HepG2 (cell line): ENCODE measurements at regions of chr11 and their contacts with region 1.

Region 1: GRCh38 chr11:128290106-128290840 is 297.1 kb downstream of the ETS1 start:
- DNase-seq: peak; percentile 21
- ATAC-seq: peak; percentile 94
- H3K4me3 ChIP-seq: no peak overlapping the region
- H3K27ac ChIP-seq: no peak overlapping the region
- H3K4me1 ChIP-seq: peaks cover 12% of the 10 kb centered on the region
- H3K27me3 ChIP-seq: peaks cover 0 to 8% of the 10 kb centered on the region in 2 experiments; a peak in 1 of 5 replicates
- CTCF ChIP-seq: peak; percentile 73
- EP300 ChIP-seq: no peak
- POLR2A ChIP-seq: no peak
- RAD21 ChIP-seq: peak; percentile 58

Region 2: GRCh38 chr11:128172046-128172878 is 118.0 kb before region 1 on chr11:
- CTCF ChIA-PET with region 1: no interaction called
- POLR2A ChIA-PET with region 1: no interaction called
- in situ Hi-C with region 1: no loop called
- intact Hi-C with region 1: loop called (anchors 1 kb)
- DNase-seq: peak; percentile 46
- ATAC-seq: peak; percentile 80
- H3K4me3 ChIP-seq: no peak overlapping the region
- H3K27ac ChIP-seq: no peak overlapping the region
- H3K4me1 ChIP-seq: no peaks in the 10 kb centered on the region
- H3K27me3 ChIP-seq: no peaks in the 10 kb centered on the region
- CTCF ChIP-seq: peak; percentile 79
- EP300 ChIP-seq: no peak
- POLR2A ChIP-seq: no peak
- RAD21 ChIP-seq: peak; percentile 41; the same call in 1 of the 2 replicates

Region 3: GRCh38 chr11:128336203-128336602 is 45.9 kb after region 1 on chr11:
- CTCF ChIA-PET with region 1: no interaction called
- POLR2A ChIA-PET with region 1: no interaction called
- in situ Hi-C with region 1: no loop called
- intact Hi-C with region 1: loop called (anchors 2 kb)
- DNase-seq: peak; percentile 44
- ATAC-seq: peak; percentile 62
- H3K4me3 ChIP-seq: no peak overlapping the region
- H3K27ac ChIP-seq: no peak overlapping the region
- H3K4me1 ChIP-seq: peaks cover 31% of the 10 kb centered on the region
- H3K27me3 ChIP-seq: no peaks in the 10 kb centered on the region
- CTCF ChIP-seq: no peak
- EP300 ChIP-seq: no peak
- POLR2A ChIP-seq: no peak
- RAD21 ChIP-seq: no peak

Region 4: DNA sequence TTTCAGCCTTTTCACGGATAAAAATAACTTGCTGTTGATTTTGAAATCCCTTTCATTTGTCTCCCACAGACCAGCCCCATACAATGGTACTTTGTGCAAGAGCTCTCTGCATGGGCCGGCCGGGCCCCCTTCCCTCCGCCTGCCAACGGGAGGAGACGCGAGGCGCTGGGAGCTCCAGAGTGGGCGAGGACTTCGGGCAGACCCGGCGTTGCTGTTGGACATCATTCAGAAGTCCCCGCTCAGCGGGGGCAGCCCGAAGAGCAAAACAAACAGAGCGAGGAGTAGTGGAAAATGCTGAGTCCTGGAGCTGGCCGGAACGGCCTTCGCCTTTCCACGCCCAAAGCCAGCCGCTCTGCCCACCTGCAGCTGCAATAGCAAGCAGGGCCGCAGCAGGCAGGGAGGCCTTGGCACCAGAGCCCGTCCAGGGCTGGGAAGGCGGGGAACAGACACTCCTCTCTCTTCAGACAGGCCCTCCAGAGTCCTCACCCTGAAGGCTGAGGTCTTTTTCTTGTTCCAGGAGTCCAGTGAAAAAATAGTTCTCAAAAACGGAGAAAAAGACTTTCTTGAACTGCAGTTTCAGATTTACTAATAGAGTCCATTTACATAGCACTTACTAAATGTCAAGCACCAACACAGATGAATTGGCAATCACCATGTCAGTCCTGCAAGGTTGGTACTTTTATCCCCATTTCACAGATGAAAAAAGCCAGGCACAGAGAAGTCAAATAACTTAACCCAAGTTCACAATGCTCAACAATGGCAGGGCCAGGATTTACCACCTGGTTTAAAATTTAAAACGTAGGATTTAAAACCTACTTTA is 161.6 kb after region 1 on chr11:
- CTCF ChIA-PET with region 1: no interaction called
- POLR2A ChIA-PET with region 1: no interaction called
- in situ Hi-C with region 1: no loop called
- intact Hi-C with region 1: loop called (anchors 5 kb)
- DNase-seq: peak; percentile 82
- ATAC-seq: peak; percentile 90
- H3K4me3 ChIP-seq: peak overlapping the region in 2 of 3 experiments; percentile 8 to 44; a peak in 3 of 6 replicates
- H3K27ac ChIP-seq: peak overlapping the region; percentile 31
- H3K4me1 ChIP-seq: peaks cover 42% of the 10 kb centered on the region
- H3K27me3 ChIP-seq: no peaks in the 10 kb centered on the region
- CTCF ChIP-seq: no peak; the same call in 1 of the 2 replicates
- EP300 ChIP-seq: no peak
- POLR2A ChIP-seq: no peak
- RAD21 ChIP-seq: no peak

Region 5: GRCh38 chr11:128467610-128468041 is 177.4 kb after region 1 on chr11:
- CTCF ChIA-PET with region 1: no interaction called
- POLR2A ChIA-PET with region 1: no interaction called
- in situ Hi-C with region 1: no loop called
- intact Hi-C with region 1: loop called (anchors 1 kb)
- DNase-seq: peak; percentile 74
- ATAC-seq: peak; percentile 71
- H3K4me3 ChIP-seq: no peak overlapping the region
- H3K27ac ChIP-seq: no peak overlapping the region
- H3K4me1 ChIP-seq: peaks cover 18% of the 10 kb centered on the region
- H3K27me3 ChIP-seq: no peaks in the 10 kb centered on the region; a peak in 1 of 5 replicates
- CTCF ChIP-seq: no peak
- EP300 ChIP-seq: peak in 1 of 2 experiments; percentile 43; a peak in 1 of 4 replicates
- POLR2A ChIP-seq: no peak
- RAD21 ChIP-seq: no peak

Region 6: GRCh38 chr11:128552783-128553661 is 262.7 kb after region 1 on chr11:
- CTCF ChIA-PET with region 1: no interaction called
- POLR2A ChIA-PET with region 1: no interaction called
- in situ Hi-C with region 1: no loop called
- intact Hi-C with region 1: no loop called
- DNase-seq: no peak
- ATAC-seq: no peak
- H3K4me3 ChIP-seq: no peak overlapping the region
- H3K27ac ChIP-seq: no peak overlapping the region
- H3K4me1 ChIP-seq: no peaks in the 10 kb centered on the region
- H3K27me3 ChIP-seq: peaks cover 2 to 10% of the 10 kb centered on the region in 2 experiments; a peak in 3 of 5 replicates
- CTCF ChIP-seq: no peak
- EP300 ChIP-seq: no peak
- POLR2A ChIP-seq: no peak
- RAD21 ChIP-seq: no peak

Region 7: DNA sequence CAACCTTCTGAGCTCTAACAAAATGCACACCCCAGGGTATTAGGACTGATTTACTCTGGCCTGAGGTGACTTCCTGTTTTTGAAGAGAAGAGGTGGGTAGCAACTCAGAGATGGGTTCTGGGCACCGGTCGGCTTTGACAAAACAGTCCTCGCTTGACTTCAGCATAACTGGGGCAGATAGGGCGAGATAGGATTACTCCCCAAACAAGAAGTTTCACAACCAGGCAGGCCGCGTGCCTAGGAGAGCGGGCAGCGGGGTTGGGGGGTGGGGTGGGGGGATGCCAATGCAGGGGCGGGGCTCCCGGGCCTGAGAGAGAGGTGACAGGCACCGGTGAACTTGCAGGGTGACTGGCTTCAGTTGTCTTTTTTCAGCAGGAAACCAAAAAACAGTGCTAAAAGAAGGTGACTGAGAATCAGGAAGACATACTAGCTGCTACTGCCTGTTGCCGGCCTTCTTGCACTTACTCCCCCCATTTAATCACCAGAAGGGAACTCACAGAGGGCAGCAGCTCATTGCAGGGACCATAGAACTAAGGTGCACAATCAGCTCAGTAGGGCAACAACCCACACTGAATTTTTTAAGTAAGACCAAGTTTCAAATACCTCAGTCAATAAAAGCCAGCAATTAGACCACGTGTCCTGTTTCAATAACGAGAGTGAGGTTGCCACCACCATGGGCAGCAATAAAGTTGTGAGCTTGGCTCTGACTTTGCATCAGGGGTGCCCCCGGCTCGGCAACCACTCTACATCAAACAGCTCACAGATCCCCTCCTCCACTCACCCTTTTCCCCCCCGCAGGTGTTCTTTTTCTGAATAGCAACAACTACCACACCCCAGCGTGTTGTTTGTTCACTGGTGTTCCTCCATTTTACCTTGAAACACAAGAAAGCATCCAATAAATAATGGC is 334.2 kb after region 1 on chr11:
- CTCF ChIA-PET with region 1: interaction called, 41 read pairs
- POLR2A ChIA-PET with region 1: no interaction called
- in situ Hi-C with region 1: loop called (anchors 5 kb)
- intact Hi-C with region 1: no loop called
- DNase-seq: no peak
- ATAC-seq: no peak
- H3K4me3 ChIP-seq: no peak overlapping the region
- H3K27ac ChIP-seq: no peak overlapping the region
- H3K4me1 ChIP-seq: no peaks in the 10 kb centered on the region
- H3K27me3 ChIP-seq: peaks cover under 1 to 56% of the 10 kb centered on the region in 2 experiments; a peak in 4 of 5 replicates
- CTCF ChIP-seq: no peak
- EP300 ChIP-seq: no peak
- POLR2A ChIP-seq: no peak
- RAD21 ChIP-seq: no peak

Region 8: DNA sequence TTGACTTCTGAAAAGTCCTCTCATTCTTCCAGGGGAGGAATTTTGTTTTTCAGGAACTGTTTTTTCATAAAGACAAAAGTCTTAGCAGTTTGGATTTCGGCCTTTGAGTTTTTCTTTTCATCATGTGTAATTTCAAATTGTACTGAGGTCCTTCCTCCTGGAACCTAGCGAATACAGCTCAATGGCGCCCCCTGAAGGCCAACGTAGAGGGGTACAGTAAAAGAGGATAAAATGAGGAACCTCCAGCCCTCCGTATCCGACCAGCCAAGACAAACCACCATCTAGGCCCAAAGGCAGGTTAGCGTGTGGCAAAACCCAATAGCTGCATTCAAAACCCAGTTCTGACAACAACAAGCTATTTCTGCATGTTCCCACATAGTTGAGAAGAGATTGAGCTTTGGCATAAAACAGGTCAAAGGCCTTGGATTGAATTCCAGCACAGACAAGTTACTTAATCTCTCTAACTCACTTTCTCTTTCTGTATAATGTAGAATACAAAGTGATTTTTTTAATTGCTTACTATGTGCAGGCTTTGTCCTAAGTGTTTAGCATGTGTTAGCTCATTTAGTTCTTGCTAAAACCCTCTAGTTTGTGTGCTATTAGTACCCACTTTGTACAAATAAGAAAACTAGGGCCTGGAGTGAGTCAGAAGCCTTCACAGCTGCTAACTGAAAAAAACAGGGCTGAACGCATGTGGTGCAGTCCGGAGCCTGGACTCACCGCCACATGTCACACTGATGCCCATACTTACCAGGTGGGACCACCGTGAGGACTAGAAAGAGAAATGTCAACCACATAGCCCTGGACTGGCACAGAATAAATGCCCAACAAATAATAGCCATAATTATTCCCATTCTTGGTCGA is 340.3 kb after region 1 on chr11:
- CTCF ChIA-PET with region 1: interaction called, 41 read pairs
- POLR2A ChIA-PET with region 1: no interaction called
- in situ Hi-C with region 1: loop called (anchors 5 kb)
- intact Hi-C with region 1: loop called (anchors 1 kb)
- DNase-seq: peak; percentile 62
- ATAC-seq: peak; percentile 94
- H3K4me3 ChIP-seq: no peak overlapping the region
- H3K27ac ChIP-seq: no peak overlapping the region
- H3K4me1 ChIP-seq: no peaks in the 10 kb centered on the region
- H3K27me3 ChIP-seq: peaks cover 1 to 26% of the 10 kb centered on the region in 2 experiments; a peak in 2 of 5 replicates
- CTCF ChIP-seq: peak; percentile 81
- EP300 ChIP-seq: no peak
- POLR2A ChIP-seq: no peak
- RAD21 ChIP-seq: peak; percentile 63